HAP-1 (cell line): ENCODE measurements at regions of chr1 and their contacts with region 1.

Region 1: GRCh38 chr1:109947582-109948286 is 36.8 kb upstream of the AHCYL1 start:
- DNase-seq: no peak
- H3K4me3 ChIP-seq: no peak overlapping the region
- H3K4me1 ChIP-seq: no peaks in the 10 kb centered on the region; the same call in 1 of the 2 replicates
- H3K27me3 ChIP-seq: no peaks in the 10 kb centered on the region

Region 2: GRCh38 chr1:109838838-109839240 is 108.9 kb before region 1 on chr1:
- in situ Hi-C with region 1: no loop called
- DNase-seq: peak in 1 of 2 experiments; percentile 16
- H3K4me3 ChIP-seq: no peak overlapping the region
- H3K4me1 ChIP-seq: no peaks in the 10 kb centered on the region
- H3K27me3 ChIP-seq: no peaks in the 10 kb centered on the region

Region 3: DNA sequence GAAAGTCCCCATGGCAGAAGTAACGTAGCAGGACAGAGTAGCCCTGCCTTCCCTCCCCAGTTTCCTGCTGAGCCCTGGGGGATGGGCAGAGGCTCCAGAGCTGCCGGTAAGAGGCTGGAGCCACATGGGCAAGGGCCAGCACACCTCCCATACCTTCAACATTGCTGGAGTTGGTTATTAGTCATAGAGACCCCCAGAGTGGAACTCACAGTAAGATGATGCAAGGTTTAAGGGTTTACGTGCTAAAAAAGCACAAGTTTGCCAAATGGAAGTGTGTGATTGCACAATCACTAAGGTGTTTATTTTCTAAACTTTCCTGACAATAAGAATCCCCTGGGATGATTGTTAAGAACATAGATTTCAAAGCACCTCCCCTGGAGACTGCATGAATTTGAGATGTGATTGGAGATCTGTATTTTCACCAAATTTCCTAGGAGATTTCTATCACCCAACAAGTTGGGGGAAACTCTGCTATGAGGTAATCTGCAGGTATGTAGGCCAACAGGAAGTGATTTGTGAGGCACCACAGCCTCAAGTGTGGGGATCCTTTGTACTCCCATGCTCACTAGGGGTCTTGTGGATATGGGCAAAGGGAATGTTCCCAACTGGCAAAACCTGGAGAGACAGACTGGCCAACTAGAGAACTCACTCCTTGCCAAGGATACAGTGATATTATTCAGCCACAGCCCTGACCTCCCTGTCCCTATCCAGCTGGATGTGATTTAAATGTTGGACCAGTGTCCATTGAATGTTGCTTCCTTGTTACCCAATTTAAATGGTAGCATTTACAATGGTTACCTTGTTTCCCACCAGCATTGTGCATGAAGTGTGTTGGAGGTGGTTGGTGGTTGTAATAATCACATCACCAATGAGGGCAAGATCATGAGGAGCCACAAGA is 74.2 kb before region 1 on chr1:
- in situ Hi-C with region 1: no loop called
- DNase-seq: no peak
- H3K4me3 ChIP-seq: no peak overlapping the region
- H3K4me1 ChIP-seq: no peaks in the 10 kb centered on the region
- H3K27me3 ChIP-seq: peaks cover 4% of the 10 kb centered on the region; the same call in 1 of the 2 replicates

Region 4: GRCh38 chr1:109886827-109887226 is 60.9 kb before region 1 on chr1:
- in situ Hi-C with region 1: loop called (anchors 10 kb)
- DNase-seq: no peak
- H3K4me3 ChIP-seq: no peak overlapping the region
- H3K4me1 ChIP-seq: no peaks in the 10 kb centered on the region
- H3K27me3 ChIP-seq: no peaks in the 10 kb centered on the region